CD4-positive, alpha-beta T cell (primary cell): ENCODE measurements at regions of chr7 and their contacts with region 1.

Region 1: GRCh38 chr7:92833024-92833765 is 3.2 kb downstream of the CDK6 start:
- DNase-seq: peak; percentile 78 to 94 (median 86)
- ATAC-seq: peak; percentile 76
- H3K4me3 ChIP-seq: peak overlapping the region; percentile 92
- H3K4me3 Mint-ChIP-seq: peak overlapping the region; percentile 96
- H3K27ac ChIP-seq: peak overlapping the region; percentile 67 to 76
- H3K27ac Mint-ChIP-seq: peak overlapping the region; percentile 85
- H3K4me1 ChIP-seq: peaks cover 45% of the 10 kb centered on the region
- H3K4me1 Mint-ChIP-seq: peaks cover 62% of the 10 kb centered on the region
- H3K27me3 ChIP-seq: no peaks in the 10 kb centered on the region
- H3K27me3 Mint-ChIP-seq: peaks cover 8% of the 10 kb centered on the region
- CTCF ChIP-seq: peak; percentile 77

Region 2: GRCh38 chr7:92590711-92591310 is 242.4 kb before region 1 on chr7:
- CTCF ChIA-PET with region 1: interaction called, 11 read pairs
- POLR2A ChIA-PET with region 1: no interaction called
- intact Hi-C with region 1: no loop called
- DNase-seq: peak in 3 of 14 experiments; percentile 6 to 24 (median 7)
- ATAC-seq: no peak
- H3K4me3 ChIP-seq: peak overlapping the region; percentile 85
- H3K4me3 Mint-ChIP-seq: peak overlapping the region; percentile 91
- H3K27ac ChIP-seq: no peak overlapping the region
- H3K27ac Mint-ChIP-seq: peak overlapping the region; percentile 95
- H3K4me1 ChIP-seq: peaks cover 30% of the 10 kb centered on the region
- H3K4me1 Mint-ChIP-seq: peaks cover 52% of the 10 kb centered on the region
- H3K27me3 ChIP-seq: no peaks in the 10 kb centered on the region
- H3K27me3 Mint-ChIP-seq: no peaks in the 10 kb centered on the region
- CTCF ChIP-seq: no peak

Region 3: GRCh38 chr7:92691578-92691977 is 141.6 kb before region 1 on chr7:
- CTCF ChIA-PET with region 1: interaction called, 14 read pairs
- POLR2A ChIA-PET with region 1: interaction called, 3 read pairs
- intact Hi-C with region 1: loop called (anchors 1 to 2 kb)
- DNase-seq: peak in 4 of 14 experiments; percentile 26 to 74 (median 68)
- ATAC-seq: peak; percentile 90
- H3K4me3 ChIP-seq: no peak overlapping the region
- H3K4me3 Mint-ChIP-seq: no peak overlapping the region
- H3K27ac ChIP-seq: no peak overlapping the region
- H3K27ac Mint-ChIP-seq: no peak overlapping the region
- H3K4me1 ChIP-seq: no peaks in the 10 kb centered on the region
- H3K4me1 Mint-ChIP-seq: peaks cover 17% of the 10 kb centered on the region
- H3K27me3 ChIP-seq: no peaks in the 10 kb centered on the region
- H3K27me3 Mint-ChIP-seq: no peaks in the 10 kb centered on the region
- CTCF ChIP-seq: peak; percentile 67

Region 4: DNA sequence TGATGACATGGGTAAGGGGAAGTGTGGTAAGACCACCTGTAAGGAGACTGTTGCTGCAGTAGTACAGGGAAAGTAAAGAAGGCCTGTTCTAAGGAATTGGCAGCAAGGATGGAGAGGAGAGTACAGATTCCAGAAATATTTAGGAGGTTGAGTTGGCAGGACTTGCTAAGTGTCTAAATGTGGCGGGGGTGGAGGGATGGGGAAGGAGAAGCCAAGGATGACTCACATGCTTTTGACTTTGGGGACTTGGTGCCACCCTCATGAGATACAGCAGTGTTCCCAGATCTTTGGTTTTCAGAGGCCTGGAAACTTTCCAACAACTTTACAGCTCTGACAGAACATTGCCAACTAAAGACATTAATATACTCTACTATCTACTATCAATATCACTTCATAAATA is 42.2 kb before region 1 on chr7:
- CTCF ChIA-PET with region 1: interaction called, 18 read pairs
- POLR2A ChIA-PET with region 1: no interaction called
- intact Hi-C with region 1: no loop called
- DNase-seq: no peak
- ATAC-seq: no peak
- H3K4me3 ChIP-seq: no peak overlapping the region
- H3K4me3 Mint-ChIP-seq: no peak overlapping the region
- H3K27ac ChIP-seq: no peak overlapping the region
- H3K27ac Mint-ChIP-seq: no peak overlapping the region
- H3K4me1 ChIP-seq: no peaks in the 10 kb centered on the region
- H3K4me1 Mint-ChIP-seq: peaks cover 10% of the 10 kb centered on the region
- H3K27me3 ChIP-seq: no peaks in the 10 kb centered on the region
- H3K27me3 Mint-ChIP-seq: no peaks in the 10 kb centered on the region
- CTCF ChIP-seq: no peak

Region 5: GRCh38 chr7:92904292-92905131 is 71.3 kb after region 1 on chr7:
- CTCF ChIA-PET with region 1: interaction called, 3 read pairs
- POLR2A ChIA-PET with region 1: no interaction called
- intact Hi-C with region 1: loop called in 1 of 2 experiments (anchors 5 kb)
- DNase-seq: peak; percentile 19 to 86 (median 62)
- ATAC-seq: peak; percentile 99
- H3K4me3 ChIP-seq: no peak overlapping the region
- H3K4me3 Mint-ChIP-seq: no peak overlapping the region
- H3K27ac ChIP-seq: no peak overlapping the region
- H3K27ac Mint-ChIP-seq: no peak overlapping the region
- H3K4me1 ChIP-seq: peaks cover 10% of the 10 kb centered on the region
- H3K4me1 Mint-ChIP-seq: peaks cover 17% of the 10 kb centered on the region
- H3K27me3 ChIP-seq: no peaks in the 10 kb centered on the region
- H3K27me3 Mint-ChIP-seq: no peaks in the 10 kb centered on the region
- CTCF ChIP-seq: no peak

Region 6: GRCh38 chr7:94004024-94004951 is 1171.1 kb after region 1 on chr7 and contains the start of gene BET1:
- CTCF ChIA-PET with region 1: no interaction called
- POLR2A ChIA-PET with region 1: no interaction called
- intact Hi-C with region 1: loop called in 1 of 2 experiments (anchors 10 kb)
- DNase-seq: peak; percentile 84 to 98 (median 90)
- ATAC-seq: peak; percentile 95
- H3K4me3 ChIP-seq: peak within 1 kb of the TSS; percentile 75
- H3K4me3 Mint-ChIP-seq: peak within 1 kb of the TSS; percentile 99
- H3K27ac ChIP-seq: peak within 1 kb of the TSS; percentile 76 to 78
- H3K27ac Mint-ChIP-seq: peak within 1 kb of the TSS; percentile 99
- H3K4me1 ChIP-seq: peaks cover 14% of the 10 kb centered on the region
- H3K4me1 Mint-ChIP-seq: peaks cover 53% of the 10 kb centered on the region
- H3K27me3 ChIP-seq: no peaks in the 10 kb centered on the region
- H3K27me3 Mint-ChIP-seq: peaks cover 18% of the 10 kb centered on the region
- CTCF ChIP-seq: no peak
- total RNA-seq, gene BET1: 7.4 to 9.5 TPM